Activated CD4-positive, alpha-beta T cell treated with anti-CD3 and anti-CD28 coated beads for 36 hours (primary cell): ENCODE measurements at regions of chr10 and their contacts with region 1.

Region 1: DNA sequence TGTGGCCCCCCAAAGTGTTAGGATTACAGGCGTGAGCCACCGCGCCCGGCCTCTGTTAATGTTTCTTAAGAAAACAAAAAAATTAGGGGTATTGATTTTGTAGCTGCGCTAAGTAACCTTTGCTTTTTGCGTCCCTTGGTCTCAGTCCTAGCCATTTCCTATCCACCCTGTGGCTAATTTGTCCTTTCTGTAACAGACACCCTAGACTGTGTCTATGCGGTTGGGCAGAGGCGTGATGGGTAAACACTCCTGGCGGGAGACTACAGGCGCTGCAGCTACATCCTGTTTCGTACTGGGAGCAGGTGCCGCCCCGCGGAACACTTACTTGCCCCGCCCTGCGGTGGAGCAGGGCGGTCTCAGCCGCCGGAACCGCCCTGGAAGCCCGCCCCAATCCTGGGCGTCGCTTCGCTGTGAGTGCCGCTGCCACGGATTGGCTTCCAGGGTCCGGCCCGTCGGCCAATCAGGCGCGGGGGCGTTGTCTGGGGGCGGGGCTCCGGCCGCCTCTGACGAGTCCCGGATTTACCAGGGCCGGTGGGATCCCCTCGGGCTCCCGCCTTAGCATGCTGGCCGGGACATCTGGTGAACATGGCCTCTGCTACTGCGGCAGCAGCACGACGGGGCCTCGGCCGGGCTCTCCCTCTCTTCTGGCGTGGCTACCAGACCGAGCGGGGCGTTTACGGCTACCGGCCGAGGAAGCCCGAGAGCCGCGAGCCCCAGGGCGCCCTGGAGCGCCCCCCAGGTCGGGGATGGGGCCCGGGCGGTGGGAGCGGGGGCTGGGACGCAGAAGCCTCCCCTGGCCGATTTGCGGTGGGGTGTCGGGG is at the start of gene DHTKD1:
- DNase-seq: peak; percentile 99
- ATAC-seq: peak; percentile 99
- H3K4me3 Mint-ChIP-seq: peak within 1 kb of the TSS; percentile 81
- H3K27ac Mint-ChIP-seq: peak within 1 kb of the TSS; percentile 93
- H3K4me1 Mint-ChIP-seq: peaks cover 22% of the 10 kb centered on the region
- H3K27me3 Mint-ChIP-seq: no peaks in the 10 kb centered on the region
- total RNA-seq, gene DHTKD1: 13.0 to 15.5 TPM

Region 2: DNA sequence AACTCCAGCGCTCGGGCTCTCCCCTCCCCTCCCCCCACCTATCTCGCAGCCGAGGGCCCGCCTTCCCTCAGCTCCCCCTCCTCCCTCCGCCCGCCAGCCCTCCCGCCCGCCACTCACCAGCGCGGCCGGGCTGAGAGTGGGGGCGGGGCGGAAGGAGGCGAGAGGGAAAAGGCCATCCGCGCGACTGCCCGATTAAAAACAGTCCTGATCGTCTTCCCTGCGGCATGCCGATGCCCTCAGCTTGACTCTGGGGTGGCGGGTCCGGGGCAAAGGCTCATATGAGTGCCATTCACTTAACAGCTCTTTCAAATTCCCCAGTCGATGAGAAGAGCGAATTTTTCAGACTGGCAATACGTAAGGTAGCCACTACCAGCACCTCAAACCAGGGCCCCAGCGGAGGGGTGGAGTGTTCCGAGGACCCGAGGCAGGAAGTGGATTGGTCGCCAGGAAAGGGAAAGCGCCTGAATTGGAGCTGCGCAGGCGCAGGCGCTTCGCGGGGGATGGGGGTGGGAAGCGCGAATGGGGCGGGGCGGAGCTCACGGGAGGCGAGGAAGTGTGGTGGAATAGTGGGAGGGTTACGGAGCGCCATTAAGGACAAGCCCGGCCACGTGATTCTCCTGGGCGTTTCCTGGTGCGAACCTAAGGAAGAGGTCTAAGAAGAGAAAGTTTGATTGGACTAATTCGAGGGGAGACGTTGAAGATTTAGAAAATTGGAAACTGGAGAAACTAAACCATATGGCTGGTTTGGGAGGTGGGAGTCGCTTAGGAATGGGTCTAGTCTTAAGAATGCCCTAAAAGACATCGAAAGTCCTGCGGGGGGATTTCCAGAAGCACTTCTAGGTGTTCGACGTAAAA is 25.6 kb before region 1 on chr10 and contains the start of gene UPF2:
- CTCF ChIA-PET with region 1: interaction called, 4 read pairs
- POLR2A ChIA-PET with region 1: interaction called, 6 read pairs
- intact Hi-C with region 1: loop called (anchors 1 kb)
- DNase-seq: peak; percentile 99
- ATAC-seq: peak; percentile 90
- H3K4me3 Mint-ChIP-seq: peak within 1 kb of the TSS; percentile 99
- H3K27ac Mint-ChIP-seq: peak within 1 kb of the TSS; percentile 100
- H3K4me1 Mint-ChIP-seq: peaks cover 37% of the 10 kb centered on the region
- H3K27me3 Mint-ChIP-seq: peaks cover 2% of the 10 kb centered on the region
- total RNA-seq, gene UPF2: 34.2 to 46.8 TPM

Region 3: GRCh38 chr10:12107781-12108180 is 39.1 kb after region 1 on chr10:
- CTCF ChIA-PET with region 1: no interaction called
- POLR2A ChIA-PET with region 1: no interaction called
- intact Hi-C with region 1: loop called in 1 of 2 experiments (anchors 1 kb)
- DNase-seq: no peak
- ATAC-seq: no peak
- H3K4me3 Mint-ChIP-seq: no peak overlapping the region
- H3K27ac Mint-ChIP-seq: no peak overlapping the region
- H3K4me1 Mint-ChIP-seq: peaks cover 21% of the 10 kb centered on the region
- H3K27me3 Mint-ChIP-seq: no peaks in the 10 kb centered on the region

Region 4: GRCh38 chr10:12121673-12122072 is 53.0 kb after region 1 on chr10:
- CTCF ChIA-PET with region 1: no interaction called
- POLR2A ChIA-PET with region 1: no interaction called
- intact Hi-C with region 1: loop called (anchors 1 kb)
- DNase-seq: no peak
- ATAC-seq: no peak
- H3K4me3 Mint-ChIP-seq: peak overlapping the region; percentile 54
- H3K27ac Mint-ChIP-seq: peak overlapping the region; percentile 94
- H3K4me1 Mint-ChIP-seq: peaks cover 32% of the 10 kb centered on the region
- H3K27me3 Mint-ChIP-seq: no peaks in the 10 kb centered on the region

Region 5: DNA sequence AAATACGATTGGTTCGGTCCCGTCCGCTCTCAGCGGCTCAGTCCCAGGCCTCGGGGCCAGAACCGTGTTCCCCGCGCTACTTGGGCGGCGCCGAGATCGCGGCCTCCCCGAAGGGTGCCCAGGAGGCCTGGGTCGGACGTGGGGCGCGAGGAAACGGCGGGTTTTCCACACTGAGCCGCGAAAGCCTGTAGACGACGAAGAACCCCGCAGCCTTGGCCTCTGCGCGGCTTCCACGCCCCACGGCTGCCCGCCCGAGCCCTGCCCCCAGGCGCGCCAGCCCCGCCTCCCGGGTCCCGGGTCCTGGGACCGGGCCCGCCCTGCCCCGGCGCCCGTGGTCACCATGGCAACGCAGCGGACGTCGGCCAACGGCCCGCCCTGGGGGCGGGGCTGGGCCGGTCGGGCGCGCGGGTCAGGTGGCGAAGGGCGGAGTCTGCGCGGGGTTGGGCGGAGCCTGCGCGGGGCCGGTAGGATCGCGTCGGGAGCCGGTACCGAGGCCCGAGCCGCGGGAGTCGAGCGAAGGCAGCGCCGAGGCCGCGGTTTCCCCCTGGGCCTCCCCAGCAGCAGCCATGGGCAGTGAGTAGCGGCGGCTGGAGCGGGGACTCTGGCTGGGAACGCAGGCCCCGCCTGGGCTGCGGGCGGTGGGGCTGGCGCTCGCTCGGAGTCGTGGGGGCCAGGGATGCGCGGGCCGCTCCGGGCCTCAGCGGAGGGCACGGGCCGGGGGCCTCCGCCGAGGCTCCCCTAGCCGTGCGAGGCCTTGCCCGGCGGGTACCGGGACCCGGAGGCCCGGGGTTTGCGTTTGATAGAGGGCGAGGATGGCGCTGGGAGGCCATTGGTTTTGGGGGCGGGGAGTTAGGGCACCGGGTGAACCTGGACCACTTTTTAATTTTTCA is 60.8 kb after region 1 on chr10 and contains the start of gene SEC61A2:
- CTCF ChIA-PET with region 1: interaction called, 5 read pairs
- POLR2A ChIA-PET with region 1: no interaction called
- intact Hi-C with region 1: loop called in 1 of 2 experiments (anchors 1 kb)
- DNase-seq: peak; percentile 99
- ATAC-seq: peak; percentile 96
- H3K4me3 Mint-ChIP-seq: peak within 1 kb of the TSS; percentile 81
- H3K27ac Mint-ChIP-seq: peak within 1 kb of the TSS; percentile 76
- H3K4me1 Mint-ChIP-seq: peaks cover 19% of the 10 kb centered on the region
- H3K27me3 Mint-ChIP-seq: no peaks in the 10 kb centered on the region
- total RNA-seq, gene SEC61A2: 11.3 to 12.0 TPM

Region 6: GRCh38 chr10:12333380-12334185 is 264.9 kb after region 1 on chr10:
- CTCF ChIA-PET with region 1: no interaction called
- POLR2A ChIA-PET with region 1: interaction called, 10 read pairs
- intact Hi-C with region 1: no loop called
- DNase-seq: peak; percentile 71
- ATAC-seq: peak; percentile 92
- H3K4me3 Mint-ChIP-seq: no peak overlapping the region
- H3K27ac Mint-ChIP-seq: no peak overlapping the region
- H3K4me1 Mint-ChIP-seq: peaks cover 15% of the 10 kb centered on the region
- H3K27me3 Mint-ChIP-seq: no peaks in the 10 kb centered on the region

Region 7: DNA sequence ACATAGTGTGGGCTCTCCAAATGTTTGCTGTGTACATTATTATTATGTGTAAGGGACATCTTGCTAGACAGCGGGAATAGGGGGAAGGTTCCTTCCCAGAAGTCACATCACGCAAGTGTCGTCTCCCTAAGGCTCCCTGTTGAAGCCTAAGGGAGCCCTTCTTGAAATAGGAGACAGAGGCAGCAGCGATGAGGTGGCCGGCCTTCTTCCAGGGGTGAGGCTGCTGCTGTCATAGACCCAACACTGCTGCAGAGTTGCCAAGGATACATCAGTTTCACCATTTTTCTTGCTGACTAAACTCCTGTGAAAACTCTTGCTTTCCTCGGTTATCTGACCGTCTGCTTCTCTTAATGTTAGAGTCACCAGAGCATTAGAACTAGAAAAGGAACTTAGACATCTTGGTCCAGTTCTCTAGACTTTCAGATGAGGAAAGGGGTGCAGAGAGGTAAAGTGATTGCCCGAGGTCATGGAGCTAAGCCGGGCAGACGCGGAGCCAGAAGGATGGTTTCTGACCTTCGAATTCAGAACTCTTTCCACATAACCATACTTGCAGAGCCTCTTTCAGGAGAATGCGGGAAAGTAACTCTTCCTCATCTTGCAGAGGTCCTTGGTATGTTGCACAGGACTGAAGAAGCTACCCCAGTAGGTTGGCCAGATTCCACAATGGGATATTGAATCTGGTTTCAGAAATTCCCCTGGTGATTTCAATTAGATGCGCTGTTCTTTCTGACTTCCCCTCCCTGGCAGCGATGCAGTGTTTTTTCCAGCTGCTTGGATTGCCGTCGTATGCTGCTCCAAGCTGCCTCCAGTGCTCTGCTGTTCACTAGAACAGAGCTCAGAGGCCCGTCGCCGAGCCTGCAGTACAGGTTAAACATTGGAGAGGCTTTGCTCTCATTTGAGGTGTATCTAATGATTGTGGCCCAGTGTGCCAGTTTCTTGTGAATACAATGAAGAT is 497.8 kb after region 1 on chr10:
- CTCF ChIA-PET with region 1: no interaction called
- POLR2A ChIA-PET with region 1: no interaction called
- intact Hi-C with region 1: no loop called
- DNase-seq: no peak
- ATAC-seq: no peak
- H3K4me3 Mint-ChIP-seq: no peak overlapping the region
- H3K27ac Mint-ChIP-seq: no peak overlapping the region
- H3K4me1 Mint-ChIP-seq: peaks cover 21% of the 10 kb centered on the region
- H3K27me3 Mint-ChIP-seq: no peaks in the 10 kb centered on the region

Region 8: GRCh38 chr10:12656518-12657142 is 588.0 kb after region 1 on chr10:
- CTCF ChIA-PET with region 1: no interaction called
- POLR2A ChIA-PET with region 1: no interaction called
- intact Hi-C with region 1: no loop called
- DNase-seq: no peak
- ATAC-seq: peak; percentile 75
- H3K4me3 Mint-ChIP-seq: no peak overlapping the region
- H3K27ac Mint-ChIP-seq: no peak overlapping the region
- H3K4me1 Mint-ChIP-seq: peaks cover 27% of the 10 kb centered on the region
- H3K27me3 Mint-ChIP-seq: no peaks in the 10 kb centered on the region

Region 9: GRCh38 chr10:13160934-13161856 is 1092.5 kb after region 1 on chr10 and contains the start of gene MCM10:
- CTCF ChIA-PET with region 1: no interaction called
- POLR2A ChIA-PET with region 1: no interaction called
- intact Hi-C with region 1: loop called (anchors 1 to 5 kb)
- DNase-seq: peak; percentile 98
- ATAC-seq: peak; percentile 100
- H3K4me3 Mint-ChIP-seq: peak within 1 kb of the TSS; percentile 91
- H3K27ac Mint-ChIP-seq: peak within 1 kb of the TSS; percentile 86
- H3K4me1 Mint-ChIP-seq: peaks cover 26% of the 10 kb centered on the region
- H3K27me3 Mint-ChIP-seq: no peaks in the 10 kb centered on the region
- total RNA-seq, gene MCM10: 86.0 to 86.2 TPM